ENCODE measurements at regions of chrX and their contacts with region 1.

Region 1: DNA sequence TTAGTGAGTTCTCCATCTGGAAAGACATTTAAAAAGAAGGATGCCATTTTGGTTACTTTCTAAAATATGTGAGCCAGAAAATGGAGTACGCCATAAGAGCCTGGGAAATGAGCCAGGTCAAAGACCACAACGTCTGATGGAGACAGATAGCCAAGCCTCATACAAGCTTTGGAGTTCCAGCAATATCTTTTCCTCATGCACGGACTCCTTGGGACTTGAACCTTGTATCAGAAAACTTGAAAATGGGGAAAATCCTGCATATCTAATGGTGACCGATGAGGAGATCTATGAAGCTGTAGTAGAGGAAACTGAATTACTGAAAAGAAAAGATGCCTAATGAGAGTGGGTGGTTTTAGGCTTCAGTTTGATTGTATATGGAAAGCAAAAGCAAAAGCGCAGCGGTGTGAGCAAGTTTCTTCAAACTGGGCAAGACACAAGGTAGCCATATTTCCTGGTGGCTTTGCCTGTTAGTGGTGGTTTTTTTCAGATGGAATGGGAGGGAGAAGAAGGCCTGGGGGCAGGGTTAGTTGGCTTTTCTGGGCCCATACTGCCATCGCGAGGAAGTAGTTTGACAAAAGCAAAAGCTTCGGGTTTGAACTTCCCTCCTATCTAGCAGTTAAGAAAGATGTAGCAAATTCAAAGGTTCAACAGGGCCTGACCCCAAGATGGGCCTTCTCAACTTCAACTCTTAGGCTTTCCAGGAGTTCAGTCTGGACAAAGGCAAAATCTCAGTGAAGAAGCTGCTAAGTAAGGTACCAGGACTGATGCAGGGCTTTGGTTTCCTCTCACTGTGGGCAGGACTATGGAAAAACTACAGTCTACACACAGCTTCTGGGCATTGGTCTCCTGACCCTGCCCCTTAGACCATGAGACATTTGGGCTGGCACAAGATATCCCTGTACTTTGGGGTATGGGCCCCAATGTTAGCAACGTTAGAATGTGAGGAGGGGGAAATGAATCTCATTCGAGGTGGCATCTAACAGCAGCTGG is 210.0 kb upstream of the STK26 start:
- DNase-seq: peak; percentile 80
- H3K4me3 Mint-ChIP-seq: peak overlapping the region; percentile 82
- H3K27ac Mint-ChIP-seq: peak overlapping the region; percentile 82
- H3K4me1 Mint-ChIP-seq: no peaks in the 10 kb centered on the region
- H3K27me3 Mint-ChIP-seq: no peaks in the 10 kb centered on the region
- CTCF ChIP-seq: peak; percentile 43

Region 2: DNA sequence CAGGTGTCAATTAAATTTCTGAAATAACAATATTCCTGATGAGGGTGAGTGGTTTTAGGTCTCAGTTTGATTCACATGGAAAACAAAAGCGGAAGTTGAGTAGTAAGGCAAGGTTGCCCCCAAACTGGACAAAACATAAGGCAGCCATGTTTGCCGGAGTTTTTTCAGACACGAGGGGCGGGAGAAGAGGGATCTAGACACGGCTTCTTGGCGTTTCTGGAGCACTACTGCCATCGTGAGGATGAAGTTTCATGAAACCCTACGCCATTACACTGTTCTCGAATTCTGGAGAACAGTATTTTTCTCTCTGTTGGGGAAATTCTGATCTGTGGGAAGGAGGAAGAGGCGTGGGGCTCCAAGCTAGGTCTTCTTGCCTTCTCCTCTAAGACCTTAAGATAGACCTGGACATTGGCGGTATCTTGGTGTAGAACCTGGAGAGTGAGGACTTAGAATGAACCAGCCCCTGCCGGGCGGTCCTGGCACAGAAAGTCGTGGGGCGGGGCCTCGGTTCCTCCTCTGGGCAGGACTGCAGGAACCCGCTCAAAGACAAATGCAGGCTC is 108.9 kb before region 1 on chrX:
- CTCF ChIA-PET with region 1: no interaction called
- POLR2A ChIA-PET with region 1: interaction called, 3 read pairs
- intact Hi-C with region 1: loop called (anchors 1 kb)
- DNase-seq: peak; percentile 96
- H3K4me3 Mint-ChIP-seq: peak overlapping the region; percentile 77
- H3K27ac Mint-ChIP-seq: peak overlapping the region; percentile 20
- H3K4me1 Mint-ChIP-seq: no peaks in the 10 kb centered on the region
- H3K27me3 Mint-ChIP-seq: no peaks in the 10 kb centered on the region
- CTCF ChIP-seq: peak; percentile 87

Region 3: GRCh38 chrX:131728295-131729145 is 84.6 kb before region 1 on chrX:
- CTCF ChIA-PET with region 1: no interaction called
- POLR2A ChIA-PET with region 1: no interaction called
- intact Hi-C with region 1: loop called (anchors 1 kb)
- DNase-seq: peak; percentile 93
- H3K4me3 Mint-ChIP-seq: peak overlapping the region; percentile 85
- H3K27ac Mint-ChIP-seq: peak overlapping the region; percentile 98
- H3K4me1 Mint-ChIP-seq: no peaks in the 10 kb centered on the region
- H3K27me3 Mint-ChIP-seq: no peaks in the 10 kb centered on the region
- CTCF ChIP-seq: peak; percentile 52

Region 4: DNA sequence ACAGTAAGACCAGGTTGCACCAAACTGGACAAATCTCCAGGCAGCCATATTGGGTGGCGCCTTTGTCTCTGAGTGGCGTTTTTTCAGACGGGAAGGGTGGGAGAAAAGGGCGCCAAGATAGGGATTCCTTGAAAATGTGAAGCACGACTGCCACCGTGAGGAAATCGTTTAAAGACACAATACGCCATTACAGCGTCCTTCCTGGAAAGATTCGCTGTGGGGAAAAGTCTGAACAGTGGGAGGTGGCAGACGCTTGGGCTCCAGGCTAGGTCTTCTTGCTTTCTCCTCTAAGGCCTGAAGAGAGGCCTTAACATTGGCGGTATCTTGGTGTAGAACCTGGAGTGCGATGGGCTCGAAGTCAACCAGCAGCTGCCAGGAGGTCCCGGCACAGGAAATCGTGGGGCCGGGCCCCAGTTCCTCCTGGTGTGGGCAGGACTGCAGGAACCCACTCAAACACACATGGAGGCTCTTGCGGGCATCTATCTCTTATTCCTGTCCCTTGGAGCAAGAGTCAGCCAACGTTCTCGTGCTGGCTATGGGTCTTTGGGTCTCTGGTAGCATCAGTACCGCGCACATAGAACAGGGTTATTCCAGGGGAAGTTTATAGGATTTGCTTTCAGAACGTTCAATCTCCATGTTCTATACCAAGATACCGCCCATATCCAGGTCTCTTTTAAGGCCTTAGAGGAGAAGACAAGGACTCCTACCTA is 60.5 kb before region 1 on chrX:
- CTCF ChIA-PET with region 1: interaction called, 6 read pairs
- POLR2A ChIA-PET with region 1: no interaction called
- intact Hi-C with region 1: loop called (anchors 2 kb)
- DNase-seq: peak; percentile 93
- H3K4me3 Mint-ChIP-seq: peak overlapping the region; percentile 72
- H3K27ac Mint-ChIP-seq: peak overlapping the region; percentile 61
- H3K4me1 Mint-ChIP-seq: peaks cover under 1% of the 10 kb centered on the region
- H3K27me3 Mint-ChIP-seq: no peaks in the 10 kb centered on the region
- CTCF ChIP-seq: no peak

Region 5: GRCh38 chrX:131778269-131779218 is 34.6 kb before region 1 on chrX:
- CTCF ChIA-PET with region 1: interaction called, 3 read pairs
- POLR2A ChIA-PET with region 1: interaction called, 3 read pairs
- intact Hi-C with region 1: loop called (anchors 2 kb)
- DNase-seq: peak; percentile 88
- H3K4me3 Mint-ChIP-seq: peak overlapping the region; percentile 72
- H3K27ac Mint-ChIP-seq: peak overlapping the region; percentile 97
- H3K4me1 Mint-ChIP-seq: peaks cover 9% of the 10 kb centered on the region
- H3K27me3 Mint-ChIP-seq: peaks cover 9% of the 10 kb centered on the region
- CTCF ChIP-seq: peak; percentile 39

Region 6: DNA sequence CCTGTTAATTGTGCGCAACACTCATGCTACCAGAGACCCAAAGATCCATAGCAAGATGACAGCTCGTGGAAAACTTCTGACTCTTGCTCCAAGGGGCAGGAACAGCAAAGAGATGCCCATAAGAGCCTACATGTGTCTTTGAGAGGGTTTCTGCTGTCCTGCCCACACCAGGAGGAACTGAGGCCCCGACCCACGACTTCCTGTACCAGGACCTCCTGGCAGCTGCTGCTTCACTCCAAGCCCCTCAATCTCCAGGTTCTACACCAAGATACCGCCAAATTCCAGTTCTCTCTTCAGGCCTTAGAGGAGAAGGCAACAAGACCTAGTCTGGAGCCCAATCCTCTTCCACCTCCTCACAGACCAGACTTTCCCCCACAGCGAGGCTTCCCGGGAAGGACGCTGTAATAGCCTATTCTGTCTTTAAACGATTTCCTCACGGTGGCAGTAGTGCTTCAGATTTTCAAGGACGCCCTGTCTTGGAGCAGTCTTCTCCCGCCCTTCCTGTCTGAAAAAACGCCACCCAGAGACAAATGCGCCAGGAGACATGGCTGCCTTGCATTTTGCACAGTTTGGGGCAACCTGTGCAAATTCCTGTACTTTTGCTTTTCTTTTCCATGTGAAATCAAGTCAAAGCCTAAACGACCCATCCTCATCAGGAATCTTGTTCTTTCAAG is 20.2 kb before region 1 on chrX:
- CTCF ChIA-PET with region 1: interaction called, 4 read pairs
- POLR2A ChIA-PET with region 1: no interaction called
- intact Hi-C with region 1: loop called (anchors 1 kb)
- DNase-seq: peak; percentile 94
- H3K4me3 Mint-ChIP-seq: peak overlapping the region; percentile 72
- H3K27ac Mint-ChIP-seq: peak overlapping the region; percentile 80
- H3K4me1 Mint-ChIP-seq: peaks cover 4% of the 10 kb centered on the region
- H3K27me3 Mint-ChIP-seq: peaks cover 37% of the 10 kb centered on the region
- CTCF ChIP-seq: peak; percentile 49

Region 7: GRCh38 chrX:131802835-131803626 is 10.1 kb before region 1 on chrX:
- CTCF ChIA-PET with region 1: interaction called, 29 read pairs
- POLR2A ChIA-PET with region 1: interaction called, 4 read pairs
- intact Hi-C with region 1: no loop called
- DNase-seq: peak; percentile 76
- H3K4me3 Mint-ChIP-seq: peak overlapping the region; percentile 70
- H3K27ac Mint-ChIP-seq: no peak overlapping the region
- H3K4me1 Mint-ChIP-seq: peaks cover 7% of the 10 kb centered on the region
- H3K27me3 Mint-ChIP-seq: no peaks in the 10 kb centered on the region
- CTCF ChIP-seq: peak; percentile 73

Measured in MCF 10A (cell line).